Activated naive CD4-positive, alpha-beta T cell treated with anti-CD3 and anti-CD28 coated beads for 36 hours (primary cell): ENCODE measurements at regions of chr11 and their contacts with region 1.

Region 1: GRCh38 chr11:93741094-93741881 is at the starts of genes C11orf54 and TAF1D:
- DNase-seq: peak; percentile 97
- H3K4me3 Mint-ChIP-seq: peak within 1 kb of the TSS; percentile 93
- H3K27ac Mint-ChIP-seq: peak within 1 kb of the TSS; percentile 97
- H3K4me1 Mint-ChIP-seq: peaks cover 44% of the 10 kb centered on the region
- H3K27me3 Mint-ChIP-seq: no peaks in the 10 kb centered on the region
- total RNA-seq, gene C11orf54: 15.1 to 16.3 TPM
- total RNA-seq, gene TAF1D: 442 to 482 TPM

Region 2: DNA sequence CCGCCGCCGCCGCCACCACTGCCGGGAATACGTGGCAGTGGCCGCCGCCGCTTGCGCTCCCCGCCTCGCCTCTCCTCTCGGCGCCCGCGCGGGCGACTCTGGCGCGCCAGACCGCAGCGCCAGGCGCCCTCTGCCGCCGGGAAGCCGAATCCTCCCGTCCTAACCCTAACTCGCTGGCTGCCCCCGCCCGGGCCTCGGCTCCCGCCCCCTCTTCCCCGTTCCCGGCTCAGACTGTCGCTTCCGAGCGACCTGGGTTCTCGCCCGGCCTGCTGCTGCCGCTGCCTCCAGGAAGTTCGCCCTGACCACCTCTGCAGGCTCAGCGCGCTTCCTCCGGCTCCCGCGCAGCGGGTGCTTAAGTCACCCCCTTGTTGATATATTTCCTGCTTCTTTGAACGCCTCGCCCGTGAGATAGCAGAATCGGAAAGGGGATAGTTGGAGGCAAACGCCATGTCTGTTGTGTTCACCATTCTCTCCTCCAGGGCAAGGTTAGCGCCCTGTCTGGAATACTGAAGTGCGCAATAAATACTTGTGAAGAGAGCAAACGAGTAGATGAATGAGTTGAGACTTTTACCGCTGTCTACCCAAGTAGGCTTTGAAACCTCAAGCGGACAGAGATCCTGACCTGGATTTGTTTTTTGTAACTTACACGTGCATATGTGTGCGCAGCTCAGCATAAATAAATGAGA is 197.9 kb before region 1 on chr11 and contains the start of gene SMCO4:
- CTCF ChIA-PET with region 1: no interaction called
- intact Hi-C with region 1: loop called (anchors 2 kb)
- DNase-seq: peak; percentile 84
- H3K4me3 Mint-ChIP-seq: peak within 1 kb of the TSS; percentile 87
- H3K27ac Mint-ChIP-seq: peak within 1 kb of the TSS; percentile 82
- H3K4me1 Mint-ChIP-seq: peaks cover 20% of the 10 kb centered on the region
- H3K27me3 Mint-ChIP-seq: no peaks in the 10 kb centered on the region
- total RNA-seq, gene SMCO4: 23.7 to 26.8 TPM

Region 3: GRCh38 chr11:93730108-93731107 is 10.9 kb before region 1 on chr11:
- CTCF ChIA-PET with region 1: interaction called, 3 read pairs
- intact Hi-C with region 1: loop called (anchors 1 kb)
- DNase-seq: no peak
- H3K4me3 Mint-ChIP-seq: no peak overlapping the region
- H3K27ac Mint-ChIP-seq: peak overlapping the region; percentile 62
- H3K4me1 Mint-ChIP-seq: peaks cover 29% of the 10 kb centered on the region
- H3K27me3 Mint-ChIP-seq: no peaks in the 10 kb centered on the region

Region 4: GRCh38 chr11:94128746-94129511 is 387.6 kb after region 1 on chr11 and contains the start of gene PANX1:
- CTCF ChIA-PET with region 1: no interaction called
- intact Hi-C with region 1: loop called (anchors 1 kb)
- DNase-seq: peak; percentile 71
- H3K4me3 Mint-ChIP-seq: no peak within 1 kb of the TSS
- H3K27ac Mint-ChIP-seq: peak within 1 kb of the TSS; percentile 88
- H3K4me1 Mint-ChIP-seq: peaks cover 21% of the 10 kb centered on the region
- H3K27me3 Mint-ChIP-seq: no peaks in the 10 kb centered on the region
- total RNA-seq, gene PANX1: 5.4 to 5.8 TPM

Region 5: GRCh38 chr11:94543695-94544645 is 802.7 kb after region 1 on chr11 and contains the start of gene FUT4:
- CTCF ChIA-PET with region 1: no interaction called
- intact Hi-C with region 1: loop called (anchors 2 kb)
- DNase-seq: peak; percentile 80
- H3K4me3 Mint-ChIP-seq: peak within 1 kb of the TSS; percentile 100
- H3K27ac Mint-ChIP-seq: peak within 1 kb of the TSS; percentile 98
- H3K4me1 Mint-ChIP-seq: peaks cover 32% of the 10 kb centered on the region
- H3K27me3 Mint-ChIP-seq: no peaks in the 10 kb centered on the region
- total RNA-seq, gene FUT4: 2.8 to 2.9 TPM